GM10248 (cell line): ENCODE measurements at regions of chr10 and their contacts with region 1.

Region 1: GRCh38 chr10:25875556-25876165 is 58.4 kb upstream of the MYO3A start:
- DNase-seq: peak; percentile 62
- CTCF ChIP-seq: peak; percentile 92

Region 2: DNA sequence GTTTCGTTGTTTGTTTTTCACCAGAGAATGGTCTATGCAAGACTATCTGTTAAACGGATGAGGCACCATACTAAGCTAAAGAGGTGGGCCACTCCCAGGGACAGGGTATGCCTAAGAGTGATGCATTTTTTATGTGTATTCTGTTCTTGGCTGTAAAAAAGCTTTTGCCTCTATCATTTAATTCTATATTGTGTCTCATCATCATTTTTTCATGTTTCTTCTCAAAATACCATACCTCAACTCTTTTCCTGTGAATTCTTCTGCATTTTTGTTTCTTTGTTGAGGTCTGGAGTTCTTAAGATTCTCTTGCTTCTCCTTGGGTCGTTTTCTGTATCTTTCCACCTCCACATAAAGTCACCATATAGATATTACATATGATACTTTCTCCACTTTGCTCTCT is 343.4 kb before region 1 on chr10:
- CTCF ChIA-PET with region 1: no interaction called
- POLR2A ChIA-PET with region 1: no interaction called
- DNase-seq: no peak
- CTCF ChIP-seq: no peak

Region 3: DNA sequence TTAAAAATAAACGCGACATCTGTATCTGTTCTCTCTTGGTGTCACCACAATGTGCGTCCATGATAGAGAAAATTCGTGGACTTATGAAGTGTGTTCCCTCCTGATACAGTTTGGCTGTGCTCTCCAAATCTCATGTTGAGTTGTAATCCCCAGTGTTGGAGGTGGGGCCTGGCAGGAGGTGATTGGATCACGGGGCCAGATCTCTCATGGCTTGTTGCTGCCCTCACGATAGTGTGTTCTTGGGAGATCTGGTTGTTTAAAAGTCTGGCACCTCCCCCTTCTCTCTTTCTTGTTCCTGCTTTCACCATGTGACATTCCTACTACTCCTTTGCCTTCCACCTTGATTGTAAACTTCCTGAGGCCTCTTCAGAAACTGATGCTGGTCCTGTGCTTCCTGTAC is 171.0 kb before region 1 on chr10:
- CTCF ChIA-PET with region 1: no interaction called
- POLR2A ChIA-PET with region 1: no interaction called
- DNase-seq: no peak
- CTCF ChIP-seq: no peak

Region 4: DNA sequence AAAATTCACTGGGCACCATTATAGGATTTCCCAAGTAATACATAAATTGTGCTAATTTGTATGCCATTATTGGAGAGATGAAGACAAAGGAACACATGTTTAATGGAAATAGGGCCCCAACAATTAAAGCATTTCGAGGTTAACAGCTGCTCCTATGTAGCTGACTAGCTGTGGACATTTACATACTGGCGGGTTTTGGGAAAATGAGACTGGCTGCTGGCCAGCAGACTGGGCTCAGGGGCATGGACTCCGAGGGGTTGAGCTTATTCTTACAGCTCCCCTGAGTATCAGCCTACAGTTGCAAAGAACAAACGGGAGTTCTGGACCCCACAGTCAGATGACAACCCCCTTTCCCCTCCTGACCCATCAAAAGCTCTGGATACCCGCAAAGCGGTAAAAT is 33.5 kb before region 1 on chr10:
- CTCF ChIA-PET with region 1: interaction called, 16 read pairs
- POLR2A ChIA-PET with region 1: no interaction called
- DNase-seq: no peak
- CTCF ChIP-seq: no peak

Region 5: GRCh38 chr10:25888627-25889026 is 13.0 kb after region 1 on chr10:
- CTCF ChIA-PET with region 1: interaction called, 26 read pairs
- POLR2A ChIA-PET with region 1: no interaction called
- DNase-seq: no peak
- CTCF ChIP-seq: no peak

Region 6: GRCh38 chr10:26269754-26270153 is 394.1 kb after region 1 on chr10:
- CTCF ChIA-PET with region 1: interaction called, 17 read pairs
- POLR2A ChIA-PET with region 1: no interaction called
- DNase-seq: peak; percentile 31
- CTCF ChIP-seq: peak; percentile 26

Region 7: DNA sequence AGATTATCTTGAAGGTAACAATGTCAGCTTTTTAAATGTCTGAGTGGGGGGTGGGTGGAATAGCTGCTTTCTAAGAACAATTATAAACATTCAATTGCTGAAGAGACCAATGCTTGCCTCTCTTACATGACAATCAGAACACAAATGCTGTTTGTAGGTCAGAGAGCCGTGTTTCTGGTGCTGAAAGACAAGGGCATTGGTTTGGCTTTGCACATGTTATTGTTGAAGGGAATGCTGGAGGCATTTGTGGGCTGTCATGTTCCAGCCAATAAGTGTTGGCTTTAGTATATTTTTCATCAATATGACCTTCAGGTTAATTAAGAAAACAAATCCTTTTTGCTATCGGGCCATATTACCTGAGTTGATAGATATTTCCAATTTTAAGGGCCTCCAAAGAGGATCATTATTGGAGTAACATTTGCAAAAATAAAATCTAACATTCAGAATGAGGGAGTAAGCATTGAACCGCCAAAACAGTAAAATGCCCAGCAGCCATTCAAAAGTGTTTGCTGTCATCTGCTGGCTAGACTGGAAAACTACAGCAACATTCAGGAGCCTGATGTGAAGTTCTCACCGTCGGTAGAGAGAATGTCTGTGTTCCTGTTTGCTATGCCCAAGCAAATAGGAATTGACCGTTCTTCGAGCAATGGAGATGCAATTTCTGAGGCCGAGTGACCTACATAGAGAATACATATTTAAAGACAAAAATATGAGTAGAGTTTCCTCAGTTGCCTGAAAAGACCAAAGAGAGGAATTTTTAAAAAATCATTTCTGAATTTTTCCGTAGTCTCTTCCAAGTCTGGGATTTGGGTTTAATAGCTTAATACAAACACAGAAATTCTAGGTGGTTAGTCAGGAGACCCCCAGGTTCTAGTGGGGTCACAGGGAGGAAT is 681.3 kb after region 1 on chr10:
- CTCF ChIA-PET with region 1: interaction called, 21 read pairs
- POLR2A ChIA-PET with region 1: no interaction called
- DNase-seq: peak; percentile 55
- CTCF ChIP-seq: peak; percentile 84